Posterior vena cava (tissue), 2 donors: ENCODE measurements at regions of chr3 and their contacts with region 1.

Region 1: DNA sequence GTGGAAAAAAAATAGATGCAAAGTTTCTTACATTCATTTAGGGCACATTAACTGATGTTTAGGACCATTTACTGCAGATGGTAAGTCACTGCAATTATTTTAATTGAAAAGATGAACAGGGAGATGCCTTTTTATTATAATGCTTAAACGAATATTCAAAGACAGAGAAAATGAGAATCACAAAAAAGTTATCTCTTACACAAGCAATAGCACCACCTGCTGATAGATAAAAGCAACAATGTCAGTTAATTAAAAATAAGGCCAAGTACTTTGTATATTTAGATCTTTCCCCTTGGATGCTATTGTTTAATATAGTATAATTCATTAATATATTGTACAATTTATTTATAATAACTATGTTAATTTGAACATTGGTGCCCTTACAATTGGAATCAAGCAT is 55.9 kb downstream of the IFT80 start:
- DNase-seq: no peak

Region 2: DNA sequence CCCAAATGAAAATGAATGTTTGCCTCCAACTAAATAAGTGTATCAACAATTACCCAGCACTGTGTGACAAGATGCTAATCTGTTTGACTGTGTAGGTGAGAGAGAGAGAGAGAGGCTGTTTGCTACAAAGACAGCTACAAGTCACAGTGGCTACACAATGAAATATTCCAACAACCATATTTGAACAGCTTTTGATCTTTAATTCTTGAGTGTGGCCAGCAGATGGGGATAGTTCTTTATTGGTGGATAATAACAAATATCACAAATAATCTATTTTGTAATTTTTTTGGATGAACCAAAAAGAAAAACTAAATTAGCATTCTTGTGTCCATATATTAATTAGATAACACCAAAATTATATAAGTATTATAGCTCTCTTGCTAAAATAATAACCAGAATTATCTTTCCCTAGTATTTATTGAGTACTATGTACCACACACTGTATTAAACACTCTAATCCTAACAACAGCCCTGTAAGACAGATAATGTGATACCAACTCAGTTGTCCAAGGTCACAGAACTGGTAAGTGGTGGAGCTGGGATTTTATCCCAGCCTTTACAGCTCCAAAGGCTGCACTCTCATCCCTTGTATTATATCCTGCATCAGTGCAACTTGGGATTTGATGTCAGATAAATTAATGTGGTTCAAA is 179.8 kb before region 1 on chr3:
- intact Hi-C with region 1: loop called in 1 of 2 experiments (anchors 10 kb)
- DNase-seq: no peak